CD4-positive, alpha-beta T cell (primary cell): ENCODE measurements at regions of chr19 and their contacts with region 1.

Region 1: DNA sequence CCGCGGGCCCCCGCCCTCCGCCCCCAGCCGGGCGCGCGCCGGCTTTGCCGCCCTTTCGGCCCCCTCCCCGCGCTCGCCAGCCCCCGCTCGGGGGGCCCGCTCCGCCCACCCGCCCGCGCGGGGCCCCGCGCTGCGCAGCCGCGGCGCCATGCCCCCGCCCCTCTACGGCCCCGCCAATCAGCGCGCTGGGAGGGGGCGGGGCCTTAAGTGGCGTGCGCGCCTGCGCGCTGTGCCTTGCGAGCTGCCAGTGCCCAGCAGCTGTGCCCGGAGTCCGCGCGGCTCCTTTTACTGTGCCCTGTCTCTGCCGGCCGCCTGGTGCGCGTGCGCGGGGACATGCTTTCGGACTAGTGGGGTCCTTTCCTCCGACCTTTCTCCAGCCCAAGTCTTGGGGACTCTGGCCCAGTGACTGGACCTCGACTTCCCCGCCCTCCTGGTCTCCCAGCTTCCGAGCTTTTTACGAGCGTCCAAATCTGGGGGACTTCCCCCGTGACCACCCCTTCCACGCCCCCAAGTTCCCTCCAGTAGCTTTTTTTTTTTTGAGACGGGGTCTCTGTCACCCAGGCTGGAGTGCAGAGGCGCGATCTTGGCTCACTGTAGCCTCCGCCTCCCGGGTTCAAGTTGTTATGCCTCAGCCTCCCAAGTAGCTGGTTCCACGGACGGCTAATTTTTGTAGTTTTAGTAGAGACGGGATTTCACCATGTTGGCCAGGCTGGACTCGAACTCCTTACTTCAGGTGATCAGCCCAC is at the start of gene MBD3:
- DNase-seq: peak; percentile 72 to 96 (median 86)
- ATAC-seq: peak; percentile 84
- H3K4me3 ChIP-seq: peak within 1 kb of the TSS; percentile 88
- H3K4me3 Mint-ChIP-seq: peak within 1 kb of the TSS; percentile 94
- H3K27ac ChIP-seq: peak within 1 kb of the TSS; percentile 87
- H3K27ac Mint-ChIP-seq: peak within 1 kb of the TSS; percentile 80
- H3K4me1 ChIP-seq: peaks cover 33% of the 10 kb centered on the region
- H3K4me1 Mint-ChIP-seq: peaks cover 21% of the 10 kb centered on the region
- H3K27me3 ChIP-seq: no peaks in the 10 kb centered on the region
- H3K27me3 Mint-ChIP-seq: no peaks in the 10 kb centered on the region
- CTCF ChIP-seq: no peak
- total RNA-seq, gene MBD3: 34.3 to 35.2 TPM

Region 2: GRCh38 chr19:1540365-1540925 is 52.5 kb before region 1 on chr19:
- CTCF ChIA-PET with region 1: interaction called, 10 read pairs
- POLR2A ChIA-PET with region 1: no interaction called
- intact Hi-C with region 1: no loop called
- DNase-seq: no peak
- ATAC-seq: no peak
- H3K4me3 ChIP-seq: no peak overlapping the region
- H3K4me3 Mint-ChIP-seq: no peak overlapping the region
- H3K27ac ChIP-seq: no peak overlapping the region
- H3K27ac Mint-ChIP-seq: no peak overlapping the region
- H3K4me1 ChIP-seq: peaks cover 5% of the 10 kb centered on the region
- H3K4me1 Mint-ChIP-seq: no peaks in the 10 kb centered on the region
- H3K27me3 ChIP-seq: peaks cover 19 to 27% of the 10 kb centered on the region in 2 experiments
- H3K27me3 Mint-ChIP-seq: peaks cover 35% of the 10 kb centered on the region
- CTCF ChIP-seq: no peak

Region 3: GRCh38 chr19:1568320-1569019 is 24.5 kb before region 1 on chr19 and contains the start of gene MEX3D:
- CTCF ChIA-PET with region 1: interaction called, 3 read pairs
- POLR2A ChIA-PET with region 1: interaction called, 3 read pairs
- intact Hi-C with region 1: loop called in 1 of 2 experiments (anchors 2 kb)
- DNase-seq: peak; percentile 68 to 96 (median 83)
- ATAC-seq: peak; percentile 89
- H3K4me3 ChIP-seq: peak within 1 kb of the TSS; percentile 32
- H3K4me3 Mint-ChIP-seq: peak within 1 kb of the TSS; percentile 45
- H3K27ac ChIP-seq: no peak within 1 kb of the TSS
- H3K27ac Mint-ChIP-seq: no peak within 1 kb of the TSS
- H3K4me1 ChIP-seq: peaks cover 13% of the 10 kb centered on the region
- H3K4me1 Mint-ChIP-seq: peaks cover 4% of the 10 kb centered on the region
- H3K27me3 ChIP-seq: no peaks in the 10 kb centered on the region
- H3K27me3 Mint-ChIP-seq: peaks cover 4% of the 10 kb centered on the region
- CTCF ChIP-seq: no peak
- total RNA-seq, gene MEX3D: 1.6 to 2.3 TPM

Region 4: DNA sequence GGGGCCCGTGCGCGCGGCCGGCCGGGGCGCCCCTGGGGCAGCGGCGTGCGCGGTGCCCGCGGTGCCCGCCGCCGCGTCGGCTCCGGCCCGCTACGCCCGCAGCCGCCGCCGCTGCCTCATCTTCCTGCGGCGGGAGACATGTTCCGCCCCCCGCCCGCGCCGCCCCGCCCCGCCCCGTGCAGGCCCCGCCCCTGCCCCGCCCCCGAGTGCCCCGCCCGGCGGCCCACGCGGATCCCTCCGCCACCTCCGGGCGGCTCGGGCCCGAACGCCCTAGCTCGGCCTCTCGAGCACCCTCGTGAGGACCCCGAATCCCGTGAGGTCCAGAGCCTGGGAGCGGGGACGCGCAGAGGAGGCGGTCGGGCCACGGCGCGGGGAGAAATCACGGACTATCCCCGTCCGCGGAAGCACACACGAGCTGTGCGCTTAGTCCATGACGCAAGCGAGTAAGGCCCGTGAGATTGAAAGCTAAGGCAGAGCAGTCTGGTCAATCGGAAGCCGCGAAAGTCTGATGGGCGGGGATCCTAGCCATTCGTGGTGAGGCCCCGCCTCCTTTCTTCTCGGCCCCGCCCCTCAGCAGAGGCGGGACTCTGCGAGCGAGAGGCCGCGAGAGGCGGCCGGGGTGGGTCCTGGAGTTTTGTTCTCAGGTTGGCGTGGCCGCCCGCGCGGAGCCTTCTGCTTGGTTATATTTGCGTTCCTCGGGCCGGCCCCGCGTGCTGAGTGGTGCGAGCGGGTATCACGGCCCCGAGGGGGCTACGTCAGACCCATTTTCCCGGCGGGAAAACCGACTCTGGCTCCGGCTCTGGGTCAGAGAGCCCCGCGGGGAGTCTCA is 59.8 kb after region 1 on chr19 and contains the start of gene TCF3:
- CTCF ChIA-PET with region 1: interaction called, 3 read pairs
- POLR2A ChIA-PET with region 1: interaction called, 36 read pairs
- intact Hi-C with region 1: loop called in 1 of 2 experiments (anchors 1 kb)
- DNase-seq: peak; percentile 97 to 99 (median 99)
- ATAC-seq: peak; percentile 90
- H3K4me3 ChIP-seq: peak within 1 kb of the TSS; percentile 63
- H3K4me3 Mint-ChIP-seq: peak within 1 kb of the TSS; percentile 97
- H3K27ac ChIP-seq: peak within 1 kb of the TSS; percentile 99
- H3K27ac Mint-ChIP-seq: peak within 1 kb of the TSS; percentile 98
- H3K4me1 ChIP-seq: peaks cover 26% of the 10 kb centered on the region
- H3K4me1 Mint-ChIP-seq: peaks cover 14% of the 10 kb centered on the region
- H3K27me3 ChIP-seq: no peaks in the 10 kb centered on the region
- H3K27me3 Mint-ChIP-seq: peaks cover 10% of the 10 kb centered on the region
- CTCF ChIP-seq: no peak
- total RNA-seq, gene TCF3: 51.2 to 52.2 TPM

Region 5: GRCh38 chr19:1718420-1719291 is 125.7 kb after region 1 on chr19:
- CTCF ChIA-PET with region 1: no interaction called
- POLR2A ChIA-PET with region 1: no interaction called
- intact Hi-C with region 1: no loop called
- DNase-seq: no peak
- ATAC-seq: no peak
- H3K4me3 ChIP-seq: no peak overlapping the region
- H3K4me3 Mint-ChIP-seq: no peak overlapping the region
- H3K27ac ChIP-seq: no peak overlapping the region
- H3K27ac Mint-ChIP-seq: no peak overlapping the region
- H3K4me1 ChIP-seq: peaks cover 3% of the 10 kb centered on the region
- H3K4me1 Mint-ChIP-seq: no peaks in the 10 kb centered on the region
- H3K27me3 ChIP-seq: peaks cover 32 to 48% of the 10 kb centered on the region in 2 experiments
- H3K27me3 Mint-ChIP-seq: peaks cover 64% of the 10 kb centered on the region
- CTCF ChIP-seq: no peak

Region 6: GRCh38 chr19:1812469-1813196 is 219.7 kb after region 1 on chr19:
- CTCF ChIA-PET with region 1: no interaction called
- POLR2A ChIA-PET with region 1: no interaction called
- intact Hi-C with region 1: loop called in 1 of 2 experiments (anchors 2 kb)
- DNase-seq: peak; percentile 70 to 93 (median 78)
- ATAC-seq: peak; percentile 70
- H3K4me3 ChIP-seq: peak overlapping the region; percentile 81
- H3K4me3 Mint-ChIP-seq: peak overlapping the region; percentile 96
- H3K27ac ChIP-seq: peak overlapping the region in 1 of 2 donors; percentile 34
- H3K27ac Mint-ChIP-seq: peak overlapping the region; percentile 87
- H3K4me1 ChIP-seq: peaks cover 22% of the 10 kb centered on the region
- H3K4me1 Mint-ChIP-seq: peaks cover 11% of the 10 kb centered on the region
- H3K27me3 ChIP-seq: no peaks in the 10 kb centered on the region
- H3K27me3 Mint-ChIP-seq: no peaks in the 10 kb centered on the region
- CTCF ChIP-seq: peak; percentile 58